Endothelial cell of umbilical vein (primary cell): ENCODE measurements at regions of chr6 and their contacts with region 1.

Region 1: GRCh38 chr6:132011582-132011981 is 60.4 kb upstream of the CCN2 start:
- DNase-seq: no peak
- H3K4me3 ChIP-seq: no peak overlapping the region
- H3K27ac ChIP-seq: no peak overlapping the region
- H3K4me1 ChIP-seq: no peaks in the 10 kb centered on the region
- H3K27me3 ChIP-seq: no peaks in the 10 kb centered on the region
- CTCF ChIP-seq: no peak
- POLR2A ChIP-seq: no peak

Region 2: GRCh38 chr6:131995917-131996316 is 15.7 kb before region 1 on chr6:
- CTCF ChIA-PET with region 1: interaction called, 3 read pairs
- POLR2A ChIA-PET with region 1: no interaction called
- dilution Hi-C with region 1: no loop called
- intact Hi-C with region 1: loop called (anchors 1 kb)
- DNase-seq: peak; percentile 88
- H3K4me3 ChIP-seq: no peak overlapping the region
- H3K27ac ChIP-seq: peak overlapping the region; percentile 37
- H3K4me1 ChIP-seq: peaks cover 11% of the 10 kb centered on the region
- H3K27me3 ChIP-seq: no peaks in the 10 kb centered on the region
- CTCF ChIP-seq: no peak
- POLR2A ChIP-seq: no peak